ENCODE measurements at regions of chr3 and their contacts with region 1.

Region 1: GRCh38 chr3:126982471-126983175 is at the start of gene PLXNA1:
- DNase-seq: peak; percentile 80
- H3K4me3 Mint-ChIP-seq: peak within 1 kb of the TSS; percentile 77
- H3K27ac Mint-ChIP-seq: peak within 1 kb of the TSS; percentile 82
- H3K4me1 Mint-ChIP-seq: peaks cover 17% of the 10 kb centered on the region
- H3K27me3 Mint-ChIP-seq: peaks cover 3% of the 10 kb centered on the region
- total RNA-seq, gene PLXNA1: 5.0 to 5.8 TPM

Region 2: GRCh38 chr3:126475413-126476114 is 507.1 kb before region 1 on chr3 and contains the start of gene ZXDC:
- CTCF ChIA-PET with region 1: interaction called, 3 read pairs
- intact Hi-C with region 1: loop called (anchors 1 kb)
- DNase-seq: peak; percentile 91
- H3K4me3 Mint-ChIP-seq: peak within 1 kb of the TSS; percentile 90
- H3K27ac Mint-ChIP-seq: peak within 1 kb of the TSS; percentile 76
- H3K4me1 Mint-ChIP-seq: peaks cover 35% of the 10 kb centered on the region
- H3K27me3 Mint-ChIP-seq: no peaks in the 10 kb centered on the region
- total RNA-seq, gene ZXDC: 23.9 TPM

Region 3: DNA sequence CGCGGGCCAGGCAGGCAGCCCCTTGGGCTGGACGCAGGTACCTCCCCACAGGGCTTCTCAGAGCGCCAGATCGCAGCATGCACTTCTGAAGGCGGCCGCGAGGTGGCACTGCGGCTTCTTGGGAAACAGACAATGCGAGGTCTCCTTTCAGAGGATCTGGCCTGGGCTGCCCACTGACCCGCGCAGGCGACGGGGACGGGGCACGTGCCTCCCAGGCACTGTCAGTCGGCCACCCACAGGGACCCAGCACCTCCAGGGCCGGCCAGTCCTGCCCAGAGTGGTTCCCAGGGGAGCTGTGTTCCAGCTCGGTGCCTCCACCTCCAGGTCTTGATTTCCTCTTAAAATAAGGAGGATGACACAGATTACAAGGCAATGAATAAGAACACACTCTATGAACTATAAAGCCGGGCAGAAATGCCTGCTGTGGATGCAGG is 303.3 kb before region 1 on chr3:
- CTCF ChIA-PET with region 1: interaction called, 17 read pairs
- intact Hi-C with region 1: loop called (anchors 1 kb)
- DNase-seq: peak; percentile 86
- H3K4me3 Mint-ChIP-seq: peak overlapping the region; percentile 5
- H3K27ac Mint-ChIP-seq: no peak overlapping the region
- H3K4me1 Mint-ChIP-seq: peaks cover 3% of the 10 kb centered on the region
- H3K27me3 Mint-ChIP-seq: peaks cover 5% of the 10 kb centered on the region

Region 4: GRCh38 chr3:126752303-126752842 is 230.2 kb before region 1 on chr3:
- CTCF ChIA-PET with region 1: no interaction called
- intact Hi-C with region 1: loop called (anchors 1 kb)
- DNase-seq: peak; percentile 77
- H3K4me3 Mint-ChIP-seq: no peak overlapping the region
- H3K27ac Mint-ChIP-seq: no peak overlapping the region
- H3K4me1 Mint-ChIP-seq: peaks cover 2% of the 10 kb centered on the region
- H3K27me3 Mint-ChIP-seq: no peaks in the 10 kb centered on the region

Region 5: GRCh38 chr3:127015282-127016042 is 32.8 kb after region 1 on chr3:
- CTCF ChIA-PET with region 1: no interaction called
- intact Hi-C with region 1: no loop called
- DNase-seq: no peak
- H3K4me3 Mint-ChIP-seq: no peak overlapping the region
- H3K27ac Mint-ChIP-seq: no peak overlapping the region
- H3K4me1 Mint-ChIP-seq: no peaks in the 10 kb centered on the region
- H3K27me3 Mint-ChIP-seq: no peaks in the 10 kb centered on the region

Region 6: DNA sequence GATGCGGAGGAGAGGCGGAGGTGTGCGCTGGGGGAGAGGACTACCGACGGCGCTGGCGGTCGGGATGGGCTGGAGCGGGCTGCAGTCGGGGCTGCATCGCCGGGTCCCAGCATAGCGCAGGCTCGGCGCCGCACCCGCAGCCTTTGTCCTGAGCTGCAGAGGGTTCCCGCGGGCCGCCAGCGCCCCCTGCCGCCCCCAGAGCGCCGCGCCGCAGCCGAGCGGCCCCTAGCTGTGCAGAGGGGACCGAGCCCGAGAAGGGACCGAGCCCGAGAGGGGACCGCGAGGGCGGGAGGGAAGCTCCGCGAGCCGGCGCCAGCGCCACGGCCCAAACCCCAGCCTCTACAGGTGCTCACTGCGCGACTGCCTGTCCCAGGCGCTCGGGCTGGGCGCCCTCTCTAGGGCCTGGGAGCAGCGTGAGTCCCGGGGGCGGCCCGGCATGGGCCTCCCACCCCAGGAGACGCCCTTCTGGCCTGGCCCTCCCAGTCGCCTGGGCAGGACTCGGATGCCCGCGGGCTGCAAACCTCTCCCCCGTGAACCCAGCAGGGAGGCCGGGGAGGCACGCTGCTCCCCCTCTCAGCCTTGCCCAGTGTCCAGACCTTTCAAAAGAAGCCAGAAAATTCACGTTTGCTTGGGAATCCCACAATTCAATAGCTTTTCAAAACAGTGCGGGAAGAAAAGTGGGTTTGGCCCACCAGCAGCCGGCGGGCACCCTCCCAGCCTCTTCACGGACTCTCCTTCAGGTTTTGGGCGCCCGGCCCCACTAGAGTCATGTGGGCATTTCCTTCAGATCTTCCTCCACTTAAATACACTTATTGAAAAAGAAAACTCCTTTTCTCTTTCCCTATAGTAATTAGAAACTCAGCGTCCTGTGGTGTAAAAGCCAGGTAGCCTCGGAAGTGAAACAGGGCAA is 473.2 kb after region 1 on chr3:
- CTCF ChIA-PET with region 1: no interaction called
- intact Hi-C with region 1: loop called (anchors 1 kb)
- DNase-seq: peak; percentile 67
- H3K4me3 Mint-ChIP-seq: no peak overlapping the region
- H3K27ac Mint-ChIP-seq: no peak overlapping the region
- H3K4me1 Mint-ChIP-seq: peaks cover 16% of the 10 kb centered on the region
- H3K27me3 Mint-ChIP-seq: peaks cover 53% of the 10 kb centered on the region

Region 7: DNA sequence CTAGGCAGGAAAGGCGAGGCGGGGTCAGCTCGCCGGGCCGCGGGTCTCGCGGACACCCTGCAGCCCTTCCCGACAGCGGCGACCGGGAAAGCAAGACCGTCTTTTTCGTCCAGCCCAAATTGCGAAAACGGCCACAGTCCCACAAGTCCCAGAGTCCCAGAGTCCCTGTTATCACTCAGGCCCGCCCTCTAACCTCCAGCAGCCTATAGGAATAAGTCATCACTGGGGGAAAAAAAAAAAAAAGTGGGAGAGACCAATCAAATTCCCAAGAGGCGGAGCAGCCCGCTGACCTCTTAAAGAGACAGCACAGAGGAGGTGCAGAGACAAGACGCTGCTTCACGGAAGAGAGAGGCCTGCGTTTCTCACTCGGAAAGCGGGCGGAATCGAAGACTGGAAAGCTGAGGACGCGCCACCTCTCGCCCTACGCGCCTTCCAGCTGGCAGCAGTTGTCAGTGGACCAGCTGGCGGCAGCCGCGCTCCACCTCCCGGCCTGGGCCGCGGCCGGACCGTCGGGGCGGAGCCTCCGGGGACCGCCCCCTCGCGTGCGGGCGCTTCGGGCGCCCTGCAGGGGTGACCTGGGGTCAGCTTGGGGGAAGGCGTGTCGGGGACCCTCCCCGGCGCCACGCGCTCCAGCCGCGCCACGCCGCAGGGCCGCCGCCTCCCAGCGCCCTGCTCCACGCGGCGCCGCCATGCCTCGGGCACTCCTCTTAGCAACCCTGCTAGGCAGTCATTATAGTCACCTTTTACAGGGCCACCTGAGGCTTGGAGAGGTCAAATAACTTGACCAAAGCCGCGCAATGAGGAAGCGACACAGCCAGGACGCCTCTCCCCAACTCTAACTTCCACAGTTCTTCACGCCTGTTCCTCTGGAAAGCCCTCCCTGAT is 608.2 kb after region 1 on chr3 and contains the start of gene TPRA1:
- CTCF ChIA-PET with region 1: no interaction called
- intact Hi-C with region 1: loop called (anchors 2 kb)
- DNase-seq: peak; percentile 84
- H3K4me3 Mint-ChIP-seq: peak within 1 kb of the TSS; percentile 93
- H3K27ac Mint-ChIP-seq: peak within 1 kb of the TSS; percentile 92
- H3K4me1 Mint-ChIP-seq: peaks cover 32% of the 10 kb centered on the region
- H3K27me3 Mint-ChIP-seq: no peaks in the 10 kb centered on the region
- total RNA-seq, gene TPRA1: 15.1 to 15.9 TPM